ENCODE measurements at regions of chr2 and their contacts with region 1.

Region 1: GRCh38 chr2:10935953-10936942 is 24.5 kb downstream of the KCNF1 start:
- DNase-seq: no peak
- H3K4me3 ChIP-seq: no peak overlapping the region
- CTCF ChIP-seq: no peak
- POLR2A ChIP-seq: no peak

Region 2: DNA sequence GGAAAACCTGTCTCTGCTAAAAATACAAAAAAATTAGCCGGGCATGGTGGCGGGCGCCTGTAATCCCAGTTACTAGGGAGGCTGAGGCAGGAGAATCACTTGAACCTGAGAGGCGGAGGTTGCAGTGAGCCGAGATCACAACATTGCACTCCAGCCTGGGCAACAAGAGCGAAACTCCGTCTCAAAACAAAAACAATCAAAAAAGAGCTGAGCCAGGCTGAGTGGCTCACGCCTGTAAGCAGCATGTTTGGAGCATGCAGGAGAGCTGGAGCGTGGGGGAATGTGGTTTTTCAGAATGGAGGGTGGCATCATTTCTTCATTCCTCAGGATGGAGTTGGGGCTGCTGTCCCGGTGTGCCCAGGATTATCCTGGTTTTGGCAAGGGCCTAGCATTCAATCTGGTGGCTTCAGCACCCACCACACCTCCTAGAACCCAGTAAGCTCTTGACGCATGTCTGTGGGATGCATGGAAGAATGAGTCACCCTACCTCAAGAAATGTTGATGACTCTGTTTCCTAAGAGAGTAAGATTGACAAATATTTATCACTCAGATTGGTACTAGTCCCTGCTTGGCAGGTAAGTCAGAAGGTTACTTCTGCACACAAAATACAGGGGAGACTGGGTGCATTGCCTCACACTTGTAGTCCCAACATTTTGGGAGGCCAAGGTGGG is 397.9 kb before region 1 on chr2:
- intact Hi-C with region 1: no loop called
- DNase-seq: no peak
- H3K4me3 ChIP-seq: no peak overlapping the region
- CTCF ChIP-seq: no peak
- POLR2A ChIP-seq: no peak

Region 3: DNA sequence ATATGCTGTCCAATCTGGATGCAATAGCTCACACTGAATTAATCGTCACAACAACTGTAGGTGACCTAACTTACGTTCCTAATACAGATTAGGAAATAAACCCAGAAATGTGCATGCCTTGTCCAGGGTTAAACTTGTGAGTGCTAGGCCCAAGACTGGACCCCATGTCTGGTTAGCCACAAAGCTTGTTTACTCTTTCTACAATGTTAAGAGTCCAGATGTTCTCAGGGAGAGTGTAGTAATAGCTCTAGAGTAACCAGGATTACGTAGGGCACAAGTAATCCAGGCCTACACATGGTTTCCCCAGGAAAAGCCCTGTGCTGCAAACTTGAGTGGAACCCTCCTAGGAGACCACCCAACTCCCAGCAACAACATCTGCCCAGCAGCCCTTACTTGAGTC is 1806.6 kb after region 1 on chr2:
- intact Hi-C with region 1: loop called (anchors 10 kb)
- DNase-seq: no peak
- H3K4me3 ChIP-seq: no peak overlapping the region
- CTCF ChIP-seq: no peak
- POLR2A ChIP-seq: no peak